ENCODE measurements at regions of chr2 and their contacts with region 1.

Region 1: GRCh38 chr2:96856776-96857673 is 791 bp downstream of the ANKRD39 start:
- DNase-seq: no peak
- ATAC-seq: no peak
- H3K4me3 ChIP-seq: peak overlapping the region; percentile 48 to 87 (median 73)
- H3K4me3 Mint-ChIP-seq: peak overlapping the region; percentile 86
- H3K27ac ChIP-seq: peak overlapping the region; percentile 73 to 88
- H3K27ac Mint-ChIP-seq: peak overlapping the region; percentile 89
- H3K4me1 ChIP-seq: peaks cover 16 to 20% of the 10 kb centered on the region in 2 donors
- H3K4me1 Mint-ChIP-seq: peaks cover 17% of the 10 kb centered on the region
- H3K27me3 ChIP-seq: peaks cover 0 to 10% (median 0%) of the 10 kb centered on the region in 4 experiments
- H3K27me3 Mint-ChIP-seq: no peaks in the 10 kb centered on the region
- CTCF ChIP-seq: no peak

Region 2: GRCh38 chr2:96195410-96196066 is 661.5 kb before region 1 on chr2:
- CTCF ChIA-PET with region 1: no interaction called
- POLR2A ChIA-PET with region 1: no interaction called
- intact Hi-C with region 1: no loop called
- DNase-seq: no peak
- ATAC-seq: no peak
- H3K4me3 ChIP-seq: no peak overlapping the region
- H3K4me3 Mint-ChIP-seq: no peak overlapping the region
- H3K27ac ChIP-seq: no peak overlapping the region
- H3K27ac Mint-ChIP-seq: no peak overlapping the region
- H3K4me1 ChIP-seq: peaks cover 15 to 20% of the 10 kb centered on the region in 2 donors
- H3K4me1 Mint-ChIP-seq: peaks cover 34% of the 10 kb centered on the region
- H3K27me3 ChIP-seq: no peaks in the 10 kb centered on the region
- H3K27me3 Mint-ChIP-seq: no peaks in the 10 kb centered on the region
- CTCF ChIP-seq: no peak

Region 3: GRCh38 chr2:96638144-96639121 is 218.6 kb before region 1 on chr2 and contains the start of gene KANSL3:
- CTCF ChIA-PET with region 1: interaction called, 8 read pairs
- POLR2A ChIA-PET with region 1: no interaction called
- intact Hi-C with region 1: loop called (anchors 1 kb)
- DNase-seq: peak; percentile 96
- ATAC-seq: peak; percentile 89
- H3K4me3 ChIP-seq: peak within 1 kb of the TSS; percentile 81 to 96 (median 88)
- H3K4me3 Mint-ChIP-seq: peak within 1 kb of the TSS; percentile 98
- H3K27ac ChIP-seq: peak within 1 kb of the TSS; percentile 57 to 88
- H3K27ac Mint-ChIP-seq: peak within 1 kb of the TSS; percentile 96
- H3K4me1 ChIP-seq: peaks cover 20 to 24% of the 10 kb centered on the region in 2 donors
- H3K4me1 Mint-ChIP-seq: peaks cover 42% of the 10 kb centered on the region
- H3K27me3 ChIP-seq: no peaks in the 10 kb centered on the region
- H3K27me3 Mint-ChIP-seq: peaks cover 4% of the 10 kb centered on the region
- CTCF ChIP-seq: no peak
- total RNA-seq, gene KANSL3: 55.4 and 56.9 TPM in 2 replicates

Region 4: DNA sequence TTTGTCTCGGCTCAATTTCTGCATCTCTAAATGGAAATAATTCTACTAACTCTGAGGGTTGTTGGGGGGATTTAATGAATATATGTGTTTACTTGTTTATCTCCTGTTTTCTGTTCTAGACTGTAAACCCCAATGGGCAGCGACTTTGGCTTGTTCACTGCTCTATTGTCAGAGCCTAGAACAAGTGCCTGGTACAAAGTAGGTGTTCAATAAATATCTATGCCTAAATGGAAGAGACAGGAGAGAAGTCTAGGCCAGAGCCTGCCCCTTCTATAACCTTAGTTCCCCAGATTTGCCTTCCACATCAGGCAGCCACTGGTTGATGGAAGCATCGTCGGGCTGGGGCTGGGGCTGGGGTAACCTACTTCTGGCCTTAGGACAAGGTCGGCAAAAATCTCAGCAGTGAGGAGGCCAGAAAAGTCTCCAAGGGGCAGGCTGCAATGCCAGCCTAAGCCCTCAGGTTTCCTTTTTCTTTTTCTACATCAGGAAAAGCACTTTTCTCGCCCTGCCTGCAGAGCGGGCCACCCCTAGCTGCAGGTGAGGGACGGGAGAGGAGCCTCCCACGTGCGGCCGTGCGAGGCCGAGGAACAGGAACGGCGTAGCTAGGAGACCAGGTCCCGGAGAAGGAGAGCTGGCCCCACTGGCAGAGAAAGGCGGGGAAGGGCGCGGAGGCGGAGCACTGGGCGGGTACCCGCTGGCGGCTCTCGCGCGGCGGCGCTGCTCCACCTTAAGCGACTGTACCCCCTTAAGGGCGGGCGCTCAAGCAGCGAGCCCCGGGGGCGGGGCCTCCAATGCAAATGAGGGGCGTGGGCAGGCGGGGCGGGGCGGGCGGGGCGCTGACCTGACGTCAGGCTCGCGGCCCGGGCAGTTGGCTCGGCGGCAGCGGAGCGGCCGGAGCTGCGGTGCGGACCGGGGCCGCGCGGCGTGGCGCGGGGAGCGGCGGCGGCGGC is 96.7 kb before region 1 on chr2 and contains the start of gene CNNM4:
- CTCF ChIA-PET with region 1: interaction called, 11 read pairs
- POLR2A ChIA-PET with region 1: interaction called, 4 read pairs
- intact Hi-C with region 1: loop called (anchors 2 kb)
- DNase-seq: peak; percentile 92
- ATAC-seq: peak; percentile 88
- H3K4me3 ChIP-seq: peak within 1 kb of the TSS; percentile 76 to 93 (median 84)
- H3K4me3 Mint-ChIP-seq: peak within 1 kb of the TSS; percentile 95
- H3K27ac ChIP-seq: peak within 1 kb of the TSS; percentile 69 to 79
- H3K27ac Mint-ChIP-seq: peak within 1 kb of the TSS; percentile 95
- H3K4me1 ChIP-seq: peaks cover 46 to 57% of the 10 kb centered on the region in 2 donors
- H3K4me1 Mint-ChIP-seq: peaks cover 54% of the 10 kb centered on the region
- H3K27me3 ChIP-seq: no peaks in the 10 kb centered on the region
- H3K27me3 Mint-ChIP-seq: no peaks in the 10 kb centered on the region
- CTCF ChIP-seq: no peak
- total RNA-seq, gene CNNM4: 24.0 and 25.6 TPM in 2 replicates

Region 5: GRCh38 chr2:96801005-96801785 is 55.8 kb before region 1 on chr2:
- CTCF ChIA-PET with region 1: interaction called, 10 read pairs
- POLR2A ChIA-PET with region 1: interaction called, 7 read pairs
- intact Hi-C with region 1: no loop called
- DNase-seq: peak; percentile 80
- ATAC-seq: peak; percentile 98
- H3K4me3 ChIP-seq: no peak overlapping the region
- H3K4me3 Mint-ChIP-seq: no peak overlapping the region
- H3K27ac ChIP-seq: no peak overlapping the region
- H3K27ac Mint-ChIP-seq: no peak overlapping the region
- H3K4me1 ChIP-seq: peaks cover 25 to 30% of the 10 kb centered on the region in 2 donors
- H3K4me1 Mint-ChIP-seq: peaks cover 4% of the 10 kb centered on the region
- H3K27me3 ChIP-seq: no peaks in the 10 kb centered on the region
- H3K27me3 Mint-ChIP-seq: no peaks in the 10 kb centered on the region
- CTCF ChIP-seq: peak; percentile 94

Region 6: DNA sequence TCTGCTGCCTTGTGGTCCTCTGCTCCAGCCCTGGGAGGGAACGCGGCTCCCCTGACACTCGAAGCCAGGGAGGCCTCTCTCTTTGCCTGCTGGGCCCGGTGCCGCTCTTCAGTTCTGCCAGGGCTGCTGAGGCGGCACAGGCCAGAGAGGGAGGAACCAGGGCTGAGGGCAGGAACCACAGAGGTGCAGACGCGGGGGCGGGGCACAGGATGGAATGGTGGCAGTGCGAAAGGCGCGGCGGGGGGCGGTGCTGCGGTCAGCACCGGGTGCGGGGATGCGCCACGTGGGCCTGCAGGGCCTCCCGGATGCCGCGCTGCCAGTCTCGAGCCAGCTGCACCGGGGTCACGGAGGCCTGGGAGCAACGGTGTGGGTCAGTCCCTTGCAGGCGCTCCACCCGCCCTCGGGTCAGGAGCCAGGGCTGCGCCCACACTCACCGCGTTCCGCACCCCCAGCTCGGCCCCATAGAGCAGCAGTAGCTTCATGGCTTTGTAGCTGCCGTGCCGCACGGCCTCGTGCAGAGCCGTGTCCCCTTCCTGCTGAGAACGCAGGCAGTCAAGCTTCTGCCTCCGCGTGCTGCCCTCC is 17.6 kb before region 1 on chr2:
- CTCF ChIA-PET with region 1: interaction called, 11 read pairs
- POLR2A ChIA-PET with region 1: interaction called, 8 read pairs
- intact Hi-C with region 1: loop called (anchors 1 kb)
- DNase-seq: peak; percentile 87
- ATAC-seq: peak; percentile 98
- H3K4me3 ChIP-seq: peak overlapping the region in 4 of 5 experiments; percentile 34 to 51 (median 47)
- H3K4me3 Mint-ChIP-seq: peak overlapping the region; percentile 82
- H3K27ac ChIP-seq: peak overlapping the region in 1 of 2 donors; percentile 42
- H3K27ac Mint-ChIP-seq: peak overlapping the region; percentile 77
- H3K4me1 ChIP-seq: peaks cover 10 to 18% of the 10 kb centered on the region in 2 donors
- H3K4me1 Mint-ChIP-seq: peaks cover 18% of the 10 kb centered on the region
- H3K27me3 ChIP-seq: no peaks in the 10 kb centered on the region
- H3K27me3 Mint-ChIP-seq: no peaks in the 10 kb centered on the region
- CTCF ChIP-seq: no peak

Region 7: DNA sequence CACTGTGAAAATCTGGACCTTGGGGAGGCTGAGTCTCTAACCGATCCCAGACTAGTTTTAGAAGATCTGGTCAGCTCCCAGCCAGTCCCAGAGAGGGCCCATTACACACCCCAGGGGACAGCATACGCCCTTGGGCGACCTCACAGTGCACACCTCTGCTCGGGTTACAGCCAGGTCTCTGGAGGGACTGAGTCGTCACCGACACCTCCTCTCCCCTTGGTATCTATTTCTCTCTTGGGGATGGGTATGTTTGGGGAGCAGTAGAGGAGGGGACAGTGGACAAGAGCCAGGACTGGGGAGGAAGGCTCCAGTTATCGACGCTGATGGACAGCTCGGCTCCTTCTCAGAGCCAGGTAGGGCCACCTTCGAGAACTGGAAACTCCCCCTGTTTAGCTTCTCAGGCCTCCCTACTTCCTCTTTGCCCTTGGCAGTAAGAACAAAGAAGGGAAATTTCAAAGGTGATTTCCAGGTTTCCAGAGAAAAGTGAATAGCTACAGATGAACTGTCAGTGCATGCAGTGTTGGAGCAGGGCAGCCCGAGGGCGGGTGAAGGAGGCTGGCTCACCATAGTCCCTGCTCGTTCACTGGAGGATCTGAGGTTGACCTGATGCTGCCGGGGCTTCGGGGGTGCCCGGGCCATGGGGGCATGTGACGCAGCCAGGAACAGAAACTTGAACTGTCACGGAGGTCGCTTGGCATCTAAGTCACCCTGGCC is 17.2 kb after region 1 on chr2:
- CTCF ChIA-PET with region 1: interaction called, 19 read pairs
- POLR2A ChIA-PET with region 1: interaction called, 3 read pairs
- intact Hi-C with region 1: loop called (anchors 1 kb)
- DNase-seq: peak; percentile 84
- ATAC-seq: peak; percentile 63
- H3K4me3 ChIP-seq: peak overlapping the region in 3 of 5 experiments; percentile 8 to 22 (median 18)
- H3K4me3 Mint-ChIP-seq: peak overlapping the region; percentile 69
- H3K27ac ChIP-seq: peak overlapping the region in 1 of 2 donors; percentile 50
- H3K27ac Mint-ChIP-seq: peak overlapping the region; percentile 51
- H3K4me1 ChIP-seq: peaks cover 24 to 29% of the 10 kb centered on the region in 2 donors
- H3K4me1 Mint-ChIP-seq: peaks cover 25% of the 10 kb centered on the region
- H3K27me3 ChIP-seq: peaks cover 0 to 18% (median 6%) of the 10 kb centered on the region in 4 experiments
- H3K27me3 Mint-ChIP-seq: peaks cover 8% of the 10 kb centered on the region
- CTCF ChIP-seq: no peak

Region 8: GRCh38 chr2:96960153-96960961 is 103.3 kb after region 1 on chr2:
- CTCF ChIA-PET with region 1: interaction called, 15 read pairs
- POLR2A ChIA-PET with region 1: interaction called, 3 read pairs
- intact Hi-C with region 1: loop called (anchors 1 kb)
- DNase-seq: peak; percentile 83
- ATAC-seq: peak; percentile 87
- H3K4me3 ChIP-seq: no peak overlapping the region
- H3K4me3 Mint-ChIP-seq: no peak overlapping the region
- H3K27ac ChIP-seq: no peak overlapping the region
- H3K27ac Mint-ChIP-seq: no peak overlapping the region
- H3K4me1 ChIP-seq: peaks cover 6 to 12% of the 10 kb centered on the region in 2 donors
- H3K4me1 Mint-ChIP-seq: peaks cover 14% of the 10 kb centered on the region
- H3K27me3 ChIP-seq: peaks cover 0 to 2% (median under 1%) of the 10 kb centered on the region in 4 experiments
- H3K27me3 Mint-ChIP-seq: peaks cover 3% of the 10 kb centered on the region
- CTCF ChIP-seq: peak; percentile 91